Naive thymus-derived CD4-positive, alpha-beta T cell (primary cell): ENCODE measurements at regions of chr7 and their contacts with region 1.

Region 1: GRCh38 chr7:114269714-114270113 is 144.9 kb upstream of the FOXP2 start:
- DNase-seq: no peak
- ATAC-seq: no peak
- H3K4me3 ChIP-seq: no peak overlapping the region
- H3K4me3 Mint-ChIP-seq: no peak overlapping the region
- H3K27ac ChIP-seq: no peak overlapping the region
- H3K27ac Mint-ChIP-seq: no peak overlapping the region
- H3K4me1 ChIP-seq: no peaks in the 10 kb centered on the region
- H3K4me1 Mint-ChIP-seq: no peaks in the 10 kb centered on the region
- H3K27me3 ChIP-seq: no peaks in the 10 kb centered on the region
- H3K27me3 Mint-ChIP-seq: no peaks in the 10 kb centered on the region

Region 2: DNA sequence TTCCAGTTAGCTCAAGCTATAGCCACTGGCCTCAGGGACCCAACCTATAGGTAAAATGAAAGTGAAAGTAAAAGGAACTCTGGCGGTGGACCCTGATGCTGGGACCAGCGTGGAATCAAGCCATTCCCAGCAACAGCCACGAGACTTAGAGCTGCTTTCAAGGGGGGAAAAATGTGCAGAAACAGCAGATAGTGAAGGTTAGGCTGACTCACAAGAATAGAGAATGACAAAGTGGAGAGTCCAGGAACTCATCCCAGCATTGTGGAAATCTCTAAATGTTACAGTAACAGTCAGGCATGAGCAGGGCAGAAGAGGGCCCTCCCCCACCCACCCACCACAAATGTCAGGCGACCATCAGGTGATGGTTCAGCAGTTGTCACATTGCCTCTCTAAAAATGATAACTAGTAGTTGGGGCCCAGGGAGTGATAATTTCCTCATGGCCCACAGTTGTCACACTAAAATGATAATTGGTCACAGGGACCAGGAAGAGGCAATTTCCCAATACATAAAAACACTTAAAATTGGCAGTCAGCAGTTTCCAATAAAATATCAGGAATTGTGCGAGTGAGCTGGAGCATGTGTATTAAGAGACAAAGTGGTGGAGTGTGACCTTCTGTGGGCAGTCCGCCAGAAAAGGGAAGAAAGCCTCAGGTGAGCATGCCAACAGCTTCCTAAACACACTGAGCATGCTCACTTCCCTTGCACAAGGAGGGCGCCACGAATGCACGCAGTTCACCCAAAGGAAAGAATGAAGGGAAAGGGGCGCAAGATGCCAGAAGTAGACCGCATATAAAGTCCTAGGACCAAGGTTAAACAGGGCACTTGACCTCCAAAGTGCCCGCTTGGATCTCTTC is 221.1 kb before region 1 on chr7:
- CTCF ChIA-PET with region 1: no interaction called
- POLR2A ChIA-PET with region 1: no interaction called
- intact Hi-C with region 1: loop called in 1 of 2 experiments (anchors 5 kb)
- DNase-seq: peak in 2 of 9 donors; percentile 0 to 7
- ATAC-seq: peak; percentile 25
- H3K4me3 ChIP-seq: peak overlapping the region; percentile 58
- H3K4me3 Mint-ChIP-seq: peak overlapping the region; percentile 69 to 85 (median 81)
- H3K27ac ChIP-seq: no peak overlapping the region
- H3K27ac Mint-ChIP-seq: peak overlapping the region in 7 of 9 donors; percentile 2 to 75 (median 55)
- H3K4me1 ChIP-seq: no peaks in the 10 kb centered on the region
- H3K4me1 Mint-ChIP-seq: peaks cover 6 to 31% (median 13%) of the 10 kb centered on the region in 7 donors
- H3K27me3 ChIP-seq: no peaks in the 10 kb centered on the region
- H3K27me3 Mint-ChIP-seq: peaks cover 0 to 4% (median 0%) of the 10 kb centered on the region in 5 donors

Region 3: GRCh38 chr7:114334989-114335388 is 65.3 kb after region 1 on chr7:
- CTCF ChIA-PET with region 1: no interaction called
- POLR2A ChIA-PET with region 1: no interaction called
- intact Hi-C with region 1: no loop called
- DNase-seq: no peak
- ATAC-seq: no peak
- H3K4me3 ChIP-seq: no peak overlapping the region
- H3K4me3 Mint-ChIP-seq: no peak overlapping the region
- H3K27ac ChIP-seq: no peak overlapping the region
- H3K27ac Mint-ChIP-seq: no peak overlapping the region
- H3K4me1 ChIP-seq: no peaks in the 10 kb centered on the region
- H3K4me1 Mint-ChIP-seq: no peaks in the 10 kb centered on the region
- H3K27me3 ChIP-seq: no peaks in the 10 kb centered on the region
- H3K27me3 Mint-ChIP-seq: no peaks in the 10 kb centered on the region